Head of caudate nucleus (tissue), 42 donors: ENCODE measurements at regions of chr6 and their contacts with region 1.

Region 1: GRCh38 chr6:151451950-151452749 is at the start of gene RMND1:
- DNase-seq: peak; percentile 98 to 100 (median 100)

Region 2: GRCh38 chr6:151082079-151082478 is 370.1 kb before region 1 on chr6:
- intact Hi-C with region 1: no loop called
- DNase-seq: no peak

Region 3: DNA sequence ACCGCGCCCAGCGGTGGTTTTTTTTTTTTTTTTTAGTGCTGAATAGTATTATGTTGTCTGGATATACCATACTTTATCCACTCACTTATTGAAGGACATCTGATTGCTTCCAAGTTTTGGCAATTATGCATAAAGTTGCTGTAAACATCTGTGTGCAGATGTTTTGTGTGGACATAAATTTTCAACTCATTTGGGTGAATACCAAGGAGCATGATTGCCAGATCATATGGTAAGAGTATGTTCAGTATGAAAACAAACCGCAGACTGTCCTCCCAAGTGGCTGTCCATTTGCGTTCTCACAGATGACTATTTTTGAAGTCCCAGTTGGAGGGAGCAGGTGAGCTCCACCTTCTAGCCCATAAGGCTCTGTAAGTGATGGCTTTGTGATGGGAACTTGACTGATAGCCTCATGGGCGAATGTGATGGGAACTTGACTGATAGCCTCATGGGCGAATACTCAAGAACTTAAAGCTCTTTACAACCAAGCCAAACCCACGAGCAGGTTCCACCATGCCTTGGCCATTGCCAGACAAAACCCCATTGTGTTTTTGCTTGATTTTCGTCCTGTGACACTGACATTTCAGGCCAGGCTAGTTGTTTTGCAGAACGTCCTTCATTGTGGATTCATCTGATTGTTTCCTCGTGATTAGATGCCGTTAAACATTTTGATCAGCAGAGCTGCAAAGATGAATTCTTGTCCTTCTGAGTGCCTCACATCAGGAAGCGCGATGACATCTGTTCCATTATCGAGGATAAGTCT is 111.8 kb before region 1 on chr6:
- intact Hi-C with region 1: no loop called
- DNase-seq: peak in 1 of 42 donors; percentile 26

Region 4: GRCh38 chr6:151390276-151391032 is 61.7 kb before region 1 on chr6:
- intact Hi-C with region 1: loop called (anchors 5 kb)
- DNase-seq: peak; percentile 89 to 99 (median 97)